ENCODE measurements at regions of chrX and their contacts with region 1.

Region 1: DNA sequence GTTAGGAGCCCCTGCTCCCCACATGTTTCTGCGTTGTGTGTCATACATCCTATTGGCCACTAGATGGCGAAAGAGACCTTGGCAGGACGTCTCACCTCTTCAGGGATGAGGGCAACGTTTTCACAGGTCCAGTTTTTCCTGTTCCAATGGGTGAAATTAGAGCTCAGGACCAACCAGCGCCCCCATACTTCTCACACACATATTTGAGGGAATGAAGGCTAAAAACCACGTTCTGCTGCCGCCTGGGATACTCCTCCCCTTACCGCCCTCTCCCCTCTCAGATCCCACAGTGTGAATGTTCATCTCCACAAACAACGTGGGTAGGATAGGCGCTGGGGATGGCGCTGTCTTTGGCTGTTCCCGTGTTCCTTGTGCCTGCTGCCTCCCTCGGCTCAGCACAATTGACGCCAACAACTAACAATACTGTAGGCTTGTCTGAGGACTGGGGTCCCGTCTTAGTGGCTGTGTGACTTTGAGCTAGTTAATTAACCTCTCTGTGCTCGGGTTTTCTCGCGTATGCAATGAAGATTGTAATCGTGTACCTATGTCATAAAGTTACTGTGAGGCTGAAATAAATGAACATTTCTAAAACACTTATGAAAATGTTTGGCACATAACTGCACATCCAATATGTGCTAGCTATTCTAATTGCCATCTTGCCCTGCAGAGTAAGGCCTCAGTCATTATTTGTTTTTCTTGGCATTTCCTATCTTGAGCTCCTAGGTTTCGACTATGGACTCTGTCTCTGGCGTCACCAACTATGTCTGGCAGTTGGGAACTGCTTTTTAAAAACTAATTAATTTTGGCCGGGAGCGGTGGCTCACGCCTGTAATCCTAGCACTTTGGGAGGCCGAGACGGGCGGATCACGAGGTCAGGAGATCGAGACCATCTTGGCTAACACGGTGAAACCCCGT is 181.3 kb upstream of the STK26 start:
- DNase-seq: no peak
- H3K4me3 ChIP-seq: no peak overlapping the region
- CTCF ChIP-seq: peak; percentile 69

Region 2: DNA sequence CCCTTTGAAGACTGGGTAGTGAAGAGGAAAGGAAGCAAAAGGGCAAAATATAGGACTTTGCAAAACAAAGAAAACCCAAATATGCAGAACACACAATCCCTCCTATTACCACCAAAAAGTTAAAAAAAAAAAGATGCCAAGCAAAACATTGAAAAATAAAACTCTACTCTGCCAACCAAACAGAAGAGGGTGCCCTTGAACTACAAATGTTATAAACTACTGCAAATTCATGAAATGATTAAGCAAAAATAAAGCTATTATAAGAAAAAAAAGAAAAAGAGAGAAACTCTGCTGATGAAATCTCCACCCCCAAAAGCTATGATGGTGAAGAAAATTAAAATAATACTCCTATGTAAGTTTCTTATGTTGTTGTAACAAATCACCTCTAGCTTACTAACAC is 12.8 kb after region 1 on chrX:
- CTCF ChIA-PET with region 1: interaction called, 12 read pairs
- POLR2A ChIA-PET with region 1: no interaction called
- DNase-seq: no peak
- H3K4me3 ChIP-seq: no peak overlapping the region
- CTCF ChIP-seq: no peak

Region 3: GRCh38 chrX:132071260-132071659 is 229.5 kb after region 1 on chrX:
- CTCF ChIA-PET with region 1: interaction called, 31 read pairs
- POLR2A ChIA-PET with region 1: no interaction called
- DNase-seq: no peak
- H3K4me3 ChIP-seq: no peak overlapping the region
- CTCF ChIP-seq: no peak

Region 4: GRCh38 chrX:132219343-132219768 is 377.6 kb after region 1 on chrX and contains the start of gene RAP2C:
- CTCF ChIA-PET with region 1: interaction called, 25 read pairs
- POLR2A ChIA-PET with region 1: no interaction called
- DNase-seq: no peak
- H3K4me3 ChIP-seq: peak within 1 kb of the TSS; percentile 63
- CTCF ChIP-seq: peak; percentile 66